Endothelial cell of umbilical vein (primary cell): ENCODE measurements at regions of chr1 and their contacts with region 1.

Region 1: DNA sequence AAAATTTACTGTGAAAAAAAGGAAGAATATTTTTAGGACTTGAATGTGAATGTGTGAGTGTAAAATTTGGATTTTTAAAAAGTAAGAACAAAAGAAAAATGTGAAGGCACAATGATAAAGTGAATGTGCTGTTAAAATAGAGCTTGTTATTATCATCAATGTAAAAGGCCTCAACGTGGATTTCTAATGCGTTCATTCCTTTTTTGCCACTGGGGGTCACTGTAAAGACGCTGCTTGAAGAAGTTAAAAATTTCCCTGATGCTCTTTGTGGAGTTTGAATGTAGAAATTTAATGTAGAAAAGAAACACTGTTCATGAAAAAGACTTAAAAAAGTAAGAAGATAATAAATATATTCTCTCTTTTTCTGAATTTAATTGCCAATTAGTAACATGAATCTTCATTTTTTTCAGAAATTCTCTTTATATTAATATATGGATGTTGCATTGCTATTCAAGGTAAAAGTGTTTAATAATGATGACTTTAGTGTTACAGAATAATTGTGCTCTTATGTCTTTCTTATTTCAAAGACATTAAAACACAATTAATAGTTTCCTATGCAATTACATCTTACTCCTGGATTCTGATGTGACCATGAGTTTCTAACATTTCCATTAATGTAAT is 161.5 kb downstream of the DNM3 start:
- DNase-seq: peak; percentile 74
- H3K4me3 ChIP-seq: no peak overlapping the region
- H3K27ac ChIP-seq: no peak overlapping the region
- H3K4me1 ChIP-seq: peaks cover 8% of the 10 kb centered on the region
- H3K27me3 ChIP-seq: no peaks in the 10 kb centered on the region
- CTCF ChIP-seq: peak; percentile 46 to 58
- POLR2A ChIP-seq: no peak

Region 2: GRCh38 chr1:171833091-171833825 is 169.6 kb before region 1 on chr1:
- CTCF ChIA-PET with region 1: no interaction called
- POLR2A ChIA-PET with region 1: no interaction called
- dilution Hi-C with region 1: no loop called
- intact Hi-C with region 1: no loop called
- DNase-seq: no peak
- H3K4me3 ChIP-seq: no peak overlapping the region
- H3K27ac ChIP-seq: no peak overlapping the region
- H3K4me1 ChIP-seq: no peaks in the 10 kb centered on the region
- H3K27me3 ChIP-seq: peaks cover 0 to 2% of the 10 kb centered on the region in 2 experiments
- CTCF ChIP-seq: no peak
- POLR2A ChIP-seq: no peak

Region 3: DNA sequence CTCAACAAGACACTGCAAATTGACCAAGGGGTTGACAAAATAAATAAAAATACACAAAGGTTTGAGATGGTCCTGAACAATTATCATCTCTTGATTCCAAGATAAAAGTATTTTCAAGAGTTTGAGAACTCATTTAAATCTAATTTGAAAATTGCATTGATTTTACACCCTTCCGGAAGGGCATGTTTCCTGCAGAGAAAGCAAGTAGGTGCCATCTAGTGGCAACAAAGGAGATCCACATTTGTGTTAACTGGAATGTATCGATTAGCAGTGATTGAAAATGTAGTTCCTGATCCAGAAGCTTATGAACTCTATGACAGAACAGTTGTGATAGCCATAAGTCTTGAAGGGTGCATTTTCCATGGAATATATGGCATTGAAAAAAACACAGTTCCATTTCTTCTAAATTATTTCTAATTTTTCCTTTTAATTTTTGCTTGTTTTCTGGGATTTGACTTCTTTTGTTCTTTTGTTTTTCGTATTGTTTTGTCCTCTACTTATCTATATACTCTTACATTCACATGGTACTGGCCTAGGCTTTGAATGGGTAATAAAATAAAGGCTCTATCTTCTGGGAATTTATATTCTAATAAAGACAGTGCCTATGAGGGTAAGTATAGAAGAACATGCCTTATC is 17.9 kb before region 1 on chr1:
- CTCF ChIA-PET with region 1: interaction called, 18 read pairs
- POLR2A ChIA-PET with region 1: no interaction called
- dilution Hi-C with region 1: no loop called
- intact Hi-C with region 1: no loop called
- DNase-seq: peak; percentile 36
- H3K4me3 ChIP-seq: no peak overlapping the region
- H3K27ac ChIP-seq: no peak overlapping the region
- H3K4me1 ChIP-seq: no peaks in the 10 kb centered on the region
- H3K27me3 ChIP-seq: no peaks in the 10 kb centered on the region
- CTCF ChIP-seq: peak; percentile 60 to 62
- POLR2A ChIP-seq: no peak

Region 4: GRCh38 chr1:172054172-172054571 is 51.3 kb after region 1 on chr1:
- CTCF ChIA-PET with region 1: interaction called, 10 read pairs
- POLR2A ChIA-PET with region 1: no interaction called
- dilution Hi-C with region 1: no loop called
- intact Hi-C with region 1: no loop called
- DNase-seq: no peak
- H3K4me3 ChIP-seq: no peak overlapping the region
- H3K27ac ChIP-seq: no peak overlapping the region
- H3K4me1 ChIP-seq: no peaks in the 10 kb centered on the region
- H3K27me3 ChIP-seq: no peaks in the 10 kb centered on the region
- CTCF ChIP-seq: no peak
- POLR2A ChIP-seq: no peak

Region 5: DNA sequence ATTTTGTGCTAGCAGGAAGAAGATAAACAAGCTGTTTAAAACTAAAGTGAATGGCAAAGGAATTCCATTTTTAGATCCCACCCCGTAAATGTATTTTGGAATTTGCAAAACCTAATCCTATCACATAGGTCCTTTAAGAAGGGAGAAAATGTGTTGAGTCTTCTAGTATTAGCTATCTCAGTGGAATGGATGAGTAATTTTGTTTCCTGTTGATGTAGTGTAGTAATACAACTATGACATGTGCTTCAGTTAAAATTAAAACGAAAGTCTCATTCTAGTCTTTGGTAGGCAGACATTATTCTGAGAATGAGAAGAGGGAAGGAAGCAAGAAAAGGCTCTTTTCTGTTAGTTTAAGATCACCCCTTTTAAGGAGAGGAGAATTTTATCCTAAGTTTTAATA is 151.7 kb after region 1 on chr1:
- CTCF ChIA-PET with region 1: interaction called, 14 read pairs
- POLR2A ChIA-PET with region 1: no interaction called
- dilution Hi-C with region 1: no loop called
- intact Hi-C with region 1: no loop called
- DNase-seq: peak; percentile 75
- H3K4me3 ChIP-seq: peak overlapping the region in 1 of 3 experiments; percentile 40
- H3K27ac ChIP-seq: peak overlapping the region; percentile 74
- H3K4me1 ChIP-seq: peaks cover 12% of the 10 kb centered on the region
- H3K27me3 ChIP-seq: no peaks in the 10 kb centered on the region
- CTCF ChIP-seq: no peak
- POLR2A ChIP-seq: no peak

Region 6: DNA sequence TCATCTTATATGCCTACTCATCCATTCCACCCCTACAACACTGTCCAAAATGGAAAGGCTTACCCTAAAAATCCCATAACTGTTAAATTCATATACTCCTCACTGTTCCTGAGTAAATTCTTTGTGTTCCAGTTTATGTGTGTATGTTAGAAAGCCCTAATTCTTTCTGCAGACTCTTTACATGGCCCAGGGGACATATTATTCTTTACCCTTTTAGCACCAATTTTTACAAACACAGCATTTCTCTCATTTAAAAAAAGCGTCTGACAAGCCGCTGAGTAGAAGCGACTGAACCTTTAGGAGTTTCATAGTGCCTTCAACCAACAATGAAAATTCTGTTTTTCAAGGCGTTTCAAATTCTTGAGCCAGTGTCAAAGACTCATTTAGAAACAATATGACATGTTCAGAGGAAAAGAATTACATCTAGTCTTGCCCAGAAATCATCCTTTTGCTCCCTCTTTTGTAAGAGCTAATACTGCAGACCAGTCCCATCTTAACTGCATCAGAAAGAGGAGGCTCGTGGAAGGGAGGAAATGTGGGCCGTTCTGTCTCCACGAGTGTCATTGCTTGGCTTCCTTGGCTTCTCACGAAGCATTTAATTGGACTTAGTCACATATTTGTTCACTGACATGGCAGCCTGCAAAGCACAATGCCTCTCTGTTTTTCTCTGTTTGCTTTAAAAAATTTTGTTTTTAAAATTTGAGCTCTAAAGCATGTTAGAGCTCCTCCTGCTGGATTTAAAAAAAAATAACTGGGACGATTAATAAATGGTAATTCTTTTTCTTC is 396.3 kb after region 1 on chr1:
- CTCF ChIA-PET with region 1: interaction called, 142 read pairs
- POLR2A ChIA-PET with region 1: interaction called, 3 read pairs
- dilution Hi-C with region 1: loop called (anchors 25 kb)
- intact Hi-C with region 1: loop called (anchors 1 kb)
- DNase-seq: peak; percentile 89
- H3K4me3 ChIP-seq: no peak overlapping the region
- H3K27ac ChIP-seq: peak overlapping the region; percentile 69
- H3K4me1 ChIP-seq: peaks cover 23% of the 10 kb centered on the region
- H3K27me3 ChIP-seq: no peaks in the 10 kb centered on the region
- CTCF ChIP-seq: peak; percentile 20 to 40
- POLR2A ChIP-seq: no peak

Region 7: GRCh38 chr1:172449585-172450534 is 447.0 kb after region 1 on chr1:
- CTCF ChIA-PET with region 1: interaction called, 42 read pairs
- POLR2A ChIA-PET with region 1: no interaction called
- dilution Hi-C with region 1: no loop called
- intact Hi-C with region 1: no loop called
- DNase-seq: peak; percentile 61
- H3K4me3 ChIP-seq: no peak overlapping the region
- H3K27ac ChIP-seq: no peak overlapping the region
- H3K4me1 ChIP-seq: peaks cover 22% of the 10 kb centered on the region
- H3K27me3 ChIP-seq: no peaks in the 10 kb centered on the region
- CTCF ChIP-seq: peak; percentile 67 to 86
- POLR2A ChIP-seq: no peak